ENCODE measurements at regions of chr7 and their contacts with region 1.

Region 1: GRCh38 chr7:74722153-74722552 is 51.7 kb upstream of the NCF1 start:
- DNase-seq: no peak
- H3K4me3 ChIP-seq: no peak overlapping the region
- H3K27ac ChIP-seq: no peak overlapping the region
- H3K4me1 ChIP-seq: peaks cover 0 to 4% of the 10 kb centered on the region in 2 donors
- H3K27me3 ChIP-seq: no peaks in the 10 kb centered on the region
- CTCF ChIP-seq: no peak
- POLR2A ChIP-seq: no peak

Region 2: GRCh38 chr7:74587435-74588126 is 134.6 kb before region 1 on chr7:
- intact Hi-C with region 1: no loop called
- DNase-seq: peak; percentile 91 to 98 (median 97)
- H3K4me3 ChIP-seq: peak overlapping the region in 1 of 4 donors; percentile 30
- H3K27ac ChIP-seq: peak overlapping the region; percentile 75 to 89 (median 84)
- H3K4me1 ChIP-seq: peaks cover 20% of the 10 kb centered on the region in 2 donors
- H3K27me3 ChIP-seq: no peaks in the 10 kb centered on the region
- CTCF ChIP-seq: peak in 3 of 6 experiments; percentile 3 to 23 (median 5)
- POLR2A ChIP-seq: peak in 1 of 2 donors; percentile 51

Region 3: DNA sequence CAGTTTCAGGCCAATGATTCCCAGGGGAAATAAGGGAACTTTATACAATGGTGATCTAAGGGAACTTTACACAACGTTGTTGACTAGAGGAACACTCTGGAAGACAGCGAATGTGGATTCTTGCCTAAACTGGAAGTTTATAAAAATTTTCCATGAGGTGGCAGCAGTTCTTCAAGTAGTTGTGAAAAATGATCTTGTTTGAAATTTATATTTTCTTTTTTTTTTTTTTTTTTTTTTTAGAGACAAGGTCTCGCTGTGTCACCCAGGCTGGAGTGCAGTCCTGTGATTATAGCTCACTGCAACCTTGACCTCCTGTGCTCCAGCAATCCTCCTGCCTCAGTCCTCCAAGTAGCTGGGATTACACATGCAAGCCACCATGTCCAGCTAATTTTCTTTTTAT is 96.7 kb before region 1 on chr7:
- intact Hi-C with region 1: loop called in 1 of 2 experiments (anchors 10 kb)
- DNase-seq: peak; percentile 60 to 87 (median 85)
- H3K4me3 ChIP-seq: no peak overlapping the region
- H3K27ac ChIP-seq: peak overlapping the region in 3 of 5 donors; percentile 48 to 85 (median 83)
- H3K4me1 ChIP-seq: peaks cover 23 to 27% of the 10 kb centered on the region in 2 donors
- H3K27me3 ChIP-seq: no peaks in the 10 kb centered on the region
- CTCF ChIP-seq: peak in 5 of 6 experiments; percentile 18 to 50 (median 20)
- POLR2A ChIP-seq: peak in 1 of 2 donors; percentile 47

Region 4: GRCh38 chr7:74684921-74685320 is 37.2 kb before region 1 on chr7:
- intact Hi-C with region 1: loop called in 1 of 2 experiments (anchors 5 kb)
- DNase-seq: peak in 1 of 7 donors; percentile 31
- H3K4me3 ChIP-seq: no peak overlapping the region
- H3K27ac ChIP-seq: no peak overlapping the region
- H3K4me1 ChIP-seq: peaks cover 0 to 17% of the 10 kb centered on the region in 2 donors
- H3K27me3 ChIP-seq: no peaks in the 10 kb centered on the region
- CTCF ChIP-seq: no peak
- POLR2A ChIP-seq: no peak